ENCODE measurements at regions of chr5 and their contacts with region 1.

Region 1: GRCh38 chr5:150599917-150600499 is 40.5 kb upstream of the SYNPO start:
- DNase-seq: peak in 1 of 2 donors; percentile 94
- H3K4me3 ChIP-seq: peak overlapping the region in 1 of 2 donors; percentile 50
- H3K27ac ChIP-seq: peak overlapping the region; percentile 92 to 96
- H3K4me1 ChIP-seq: peaks cover 35 to 80% of the 10 kb centered on the region in 2 donors
- H3K27me3 ChIP-seq: no peaks in the 10 kb centered on the region
- CTCF ChIP-seq: no peak

Region 2: GRCh38 chr5:150357326-150358260 is 242.4 kb before region 1 on chr5 and contains the start of gene TCOF1:
- intact Hi-C with region 1: no loop called
- DNase-seq: peak; percentile 92 to 98
- H3K4me3 ChIP-seq: peak within 1 kb of the TSS; percentile 60 to 80
- H3K27ac ChIP-seq: peak within 1 kb of the TSS in 1 of 2 donors; percentile 9
- H3K4me1 ChIP-seq: peaks cover 0 to 3% of the 10 kb centered on the region in 2 donors
- H3K27me3 ChIP-seq: no peaks in the 10 kb centered on the region
- CTCF ChIP-seq: no peak
- total RNA-seq, gene TCOF1: 31.4 TPM

Region 3: DNA sequence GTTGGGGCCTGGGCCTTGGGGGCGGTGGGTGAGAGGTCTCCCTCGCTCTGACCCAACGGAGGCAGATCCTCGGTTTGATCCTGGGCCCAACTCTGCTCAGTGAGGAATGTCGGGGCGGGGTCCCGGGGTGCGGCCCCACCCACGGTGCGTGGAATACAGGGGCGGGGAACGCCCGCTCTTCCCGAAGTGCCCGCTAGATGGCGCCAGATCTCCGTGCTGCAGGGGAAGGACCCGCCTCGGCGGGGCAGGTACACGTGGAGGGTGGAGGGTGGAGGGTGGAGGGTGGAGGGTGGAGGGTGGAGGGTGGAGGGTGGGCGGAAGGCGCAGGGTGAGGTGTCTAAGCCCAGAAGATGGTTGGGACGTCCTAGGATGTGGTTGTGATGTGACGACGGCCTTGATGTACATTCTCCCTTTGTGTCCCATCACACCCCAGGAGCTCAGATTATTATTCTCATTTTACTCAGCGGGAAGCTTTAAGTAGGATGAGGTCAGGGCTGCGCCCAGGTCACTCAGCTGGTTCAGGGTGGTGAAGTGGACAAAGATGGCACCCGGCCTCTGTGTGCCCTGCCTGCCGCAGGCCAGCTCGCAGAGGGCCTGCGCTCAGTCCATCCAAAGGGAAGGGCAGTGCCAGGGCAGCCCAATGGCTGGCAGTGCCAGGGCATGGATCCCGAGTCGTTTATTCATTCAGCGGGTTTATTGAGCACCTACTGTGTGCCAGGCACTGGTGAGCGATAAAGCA is 141.0 kb before region 1 on chr5:
- intact Hi-C with region 1: no loop called
- DNase-seq: peak; percentile 24 to 91
- H3K4me3 ChIP-seq: peak overlapping the region in 1 of 2 donors; percentile 55
- H3K27ac ChIP-seq: no peak overlapping the region
- H3K4me1 ChIP-seq: no peaks in the 10 kb centered on the region
- H3K27me3 ChIP-seq: no peaks in the 10 kb centered on the region
- CTCF ChIP-seq: peak; percentile 84 to 97 (median 90)

Region 4: GRCh38 chr5:150609843-150610584 is 10.0 kb after region 1 on chr5:
- intact Hi-C with region 1: loop called (anchors 1 kb)
- DNase-seq: peak; percentile 75 to 95
- H3K4me3 ChIP-seq: no peak overlapping the region
- H3K27ac ChIP-seq: peak overlapping the region; percentile 92 to 96
- H3K4me1 ChIP-seq: peaks cover 40 to 86% of the 10 kb centered on the region in 2 donors
- H3K27me3 ChIP-seq: no peaks in the 10 kb centered on the region
- CTCF ChIP-seq: no peak

Region 5: DNA sequence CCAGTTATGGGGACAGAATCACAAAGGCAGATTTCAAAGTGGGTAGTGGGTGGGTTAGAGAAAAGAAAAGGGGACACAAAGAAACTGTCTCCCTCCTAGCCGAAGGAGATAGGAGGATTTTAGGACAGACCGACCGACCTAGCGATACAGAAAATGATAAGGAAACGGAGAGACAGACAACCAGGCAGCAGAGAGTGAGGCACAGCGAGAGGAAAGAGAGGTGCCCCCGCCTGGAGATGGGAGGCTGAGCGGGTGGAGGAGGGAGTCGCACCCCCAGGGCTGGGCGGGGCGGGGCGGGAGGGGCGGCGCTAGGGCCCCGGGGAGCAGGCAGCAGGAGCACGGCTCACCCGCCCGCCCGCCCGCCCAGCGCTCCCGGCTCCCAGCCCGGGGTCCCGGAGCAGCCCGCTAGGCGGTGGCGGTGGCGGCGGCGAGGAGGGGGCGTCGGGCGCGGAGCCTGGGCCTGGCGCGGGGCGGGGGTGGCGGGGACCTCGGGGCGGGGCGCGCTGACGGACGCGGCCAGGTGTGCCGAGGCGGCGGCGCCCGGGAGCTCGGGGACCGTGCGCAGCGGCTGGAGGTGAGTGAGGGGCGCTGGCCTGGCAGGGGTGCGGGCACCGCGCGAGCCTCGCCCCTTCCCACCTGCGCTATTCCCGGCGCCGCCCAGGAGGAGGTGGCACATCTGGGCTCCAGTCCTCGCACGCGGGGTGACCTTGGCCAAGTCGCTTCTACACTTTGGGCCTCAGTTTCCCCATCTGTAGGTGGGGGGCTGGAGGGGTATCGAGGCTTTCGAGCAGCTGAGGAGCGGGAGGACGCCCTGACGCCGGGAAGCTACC is 24.5 kb after region 1 on chr5:
- intact Hi-C with region 1: loop called (anchors 2 kb)
- DNase-seq: no peak
- H3K4me3 ChIP-seq: peak overlapping the region; percentile 81 to 95
- H3K27ac ChIP-seq: peak overlapping the region; percentile 96 to 99
- H3K4me1 ChIP-seq: peaks cover 18 to 51% of the 10 kb centered on the region in 2 donors
- H3K27me3 ChIP-seq: no peaks in the 10 kb centered on the region
- CTCF ChIP-seq: no peak

Region 6: GRCh38 chr5:150640311-150641005 is 40.5 kb after region 1 on chr5 and contains the start of gene SYNPO:
- intact Hi-C with region 1: loop called (anchors 5 kb)
- DNase-seq: peak; percentile 70 to 95
- H3K4me3 ChIP-seq: peak within 1 kb of the TSS; percentile 42 to 48
- H3K27ac ChIP-seq: peak within 1 kb of the TSS; percentile 95 to 96
- H3K4me1 ChIP-seq: peaks cover 61 to 92% of the 10 kb centered on the region in 2 donors
- H3K27me3 ChIP-seq: no peaks in the 10 kb centered on the region
- CTCF ChIP-seq: peak in 1 of 3 experiments; percentile 10
- total RNA-seq, gene SYNPO: 128 TPM

Measured in ascending aorta (tissue), 2 donors.